Dendritic cell treated with granulocyte-macrophage colony-stimulating factor and Interleukin-4, amounts not matched to agents 40 ng/mL and 50 ng/mL, for 4 days (primary cell): ENCODE measurements at regions of chr2 and their contacts with region 1.

Region 1: GRCh38 chr2:8583400-8584173 is 98.3 kb upstream of the ID2 start:
- H3K4me3 Mint-ChIP-seq: peak overlapping the region; percentile 61
- H3K27ac Mint-ChIP-seq: peak overlapping the region; percentile 86
- H3K4me1 Mint-ChIP-seq: peaks cover 69% of the 10 kb centered on the region
- H3K27me3 Mint-ChIP-seq: peaks cover 23% of the 10 kb centered on the region

Region 2: GRCh38 chr2:8525582-8526402 is 57.8 kb before region 1 on chr2:
- intact Hi-C with region 1: loop called (anchors 5 kb)
- H3K4me3 Mint-ChIP-seq: peak overlapping the region; percentile 56
- H3K27ac Mint-ChIP-seq: peak overlapping the region; percentile 80
- H3K4me1 Mint-ChIP-seq: peaks cover 93% of the 10 kb centered on the region
- H3K27me3 Mint-ChIP-seq: peaks cover 3% of the 10 kb centered on the region

Region 3: GRCh38 chr2:8544786-8545694 is 38.5 kb before region 1 on chr2:
- intact Hi-C with region 1: loop called (anchors 2 kb)
- H3K4me3 Mint-ChIP-seq: peak overlapping the region; percentile 24
- H3K27ac Mint-ChIP-seq: peak overlapping the region; percentile 98
- H3K4me1 Mint-ChIP-seq: peaks cover 88% of the 10 kb centered on the region
- H3K27me3 Mint-ChIP-seq: peaks cover 8% of the 10 kb centered on the region

Region 4: GRCh38 chr2:8598295-8599165 is 14.9 kb after region 1 on chr2:
- intact Hi-C with region 1: loop called (anchors 2 kb)
- H3K4me3 Mint-ChIP-seq: no peak overlapping the region
- H3K27ac Mint-ChIP-seq: peak overlapping the region; percentile 37
- H3K4me1 Mint-ChIP-seq: peaks cover 59% of the 10 kb centered on the region
- H3K27me3 Mint-ChIP-seq: peaks cover 4% of the 10 kb centered on the region